CD14-positive monocyte (primary cell): ENCODE measurements at regions of chr5 and their contacts with region 1.

Region 1: DNA sequence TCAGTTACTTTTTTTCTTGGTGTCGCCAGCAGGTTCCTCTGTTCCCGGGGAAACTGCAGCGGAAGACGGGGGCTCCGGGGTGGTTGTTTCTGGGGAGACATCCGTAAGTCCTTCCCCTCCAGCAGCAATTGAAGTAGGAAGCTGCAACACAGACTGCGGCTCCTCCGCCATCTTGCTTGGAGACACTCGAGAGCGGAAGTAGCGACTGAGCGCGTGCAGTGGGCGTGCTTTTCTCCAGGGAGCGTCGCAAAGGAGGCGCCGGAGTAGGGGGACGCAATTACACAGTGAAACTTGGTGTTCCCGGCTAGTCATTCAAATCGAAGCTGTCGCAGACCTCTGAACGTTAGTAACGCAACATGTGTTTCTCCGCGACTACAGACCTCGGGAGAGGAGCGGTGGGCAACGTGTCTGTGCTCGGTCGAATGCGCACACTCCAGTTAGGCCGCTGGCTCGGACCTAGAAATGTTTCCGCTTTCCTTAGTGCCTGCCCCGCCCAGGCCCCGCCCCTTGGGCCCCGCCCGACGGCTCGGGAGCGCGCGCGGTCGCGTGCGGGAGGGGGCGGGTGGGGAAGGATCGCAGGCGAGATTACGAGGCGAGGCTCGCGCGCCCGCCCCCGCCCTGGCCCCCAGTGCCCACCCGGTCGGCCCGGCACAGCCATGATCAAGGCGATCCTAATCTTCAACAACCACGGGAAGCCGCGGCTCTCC is at the starts of genes AP3S1 and ATG12:
- DNase-seq: peak; percentile 91 to 96 (median 92)
- H3K4me3 ChIP-seq: peak within 1 kb of the TSS; percentile 75 to 92 (median 91)
- H3K4me3 Mint-ChIP-seq: peak within 1 kb of the TSS; percentile 95 to 98
- H3K27ac ChIP-seq: peak within 1 kb of the TSS; percentile 96 to 99
- H3K27ac Mint-ChIP-seq: peak within 1 kb of the TSS; percentile 98 to 100 (median 100)
- H3K4me1 ChIP-seq: peaks cover 36 to 48% of the 10 kb centered on the region in 2 donors
- H3K4me1 Mint-ChIP-seq: peaks cover 44% of the 10 kb centered on the region
- H3K27me3 ChIP-seq: no peaks in the 10 kb centered on the region
- H3K27me3 Mint-ChIP-seq: no peaks in the 10 kb centered on the region
- CTCF ChIP-seq: no peak
- polyA plus RNA-seq, gene AP3S1: 30.2 to 86.1 (median 84.8) TPM
- polyA plus RNA-seq, gene ATG12: 44.3 to 143 (median 101) TPM

Region 2: DNA sequence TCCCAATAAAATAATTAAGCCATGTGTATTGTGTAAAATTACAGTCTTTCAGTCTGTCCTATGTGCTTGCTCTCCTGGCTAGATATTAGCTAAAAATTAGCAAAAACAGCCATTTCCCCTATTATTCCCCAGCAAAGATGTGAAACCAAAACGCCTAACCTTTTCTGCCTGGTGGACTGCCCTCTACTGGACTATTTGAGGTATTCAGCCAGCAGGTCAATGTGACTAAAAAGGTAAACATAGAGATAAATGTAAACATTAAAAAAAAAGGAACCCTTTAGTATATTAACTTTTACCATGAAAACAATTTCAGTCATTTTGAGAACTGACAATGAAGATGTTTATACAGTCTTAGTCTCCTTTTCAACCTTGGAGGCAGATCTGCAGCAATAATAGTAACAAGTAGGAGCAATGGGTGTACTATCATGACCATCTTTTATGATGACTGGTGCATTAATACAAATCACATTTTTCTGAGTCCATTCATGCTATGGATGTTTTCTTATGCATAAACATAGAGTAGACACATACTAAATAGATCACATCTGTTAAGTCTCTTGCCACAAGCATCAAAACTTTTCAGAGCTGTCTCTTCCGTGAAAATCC is 10.3 kb before region 1 on chr5:
- intact Hi-C with region 1: no loop called
- DNase-seq: peak; percentile 37 to 57 (median 52)
- H3K4me3 ChIP-seq: no peak overlapping the region
- H3K4me3 Mint-ChIP-seq: no peak overlapping the region
- H3K27ac ChIP-seq: no peak overlapping the region
- H3K27ac Mint-ChIP-seq: peak overlapping the region in 1 of 7 donors; percentile 29
- H3K4me1 ChIP-seq: no peaks in the 10 kb centered on the region
- H3K4me1 Mint-ChIP-seq: no peaks in the 10 kb centered on the region
- H3K27me3 ChIP-seq: no peaks in the 10 kb centered on the region
- H3K27me3 Mint-ChIP-seq: no peaks in the 10 kb centered on the region
- CTCF ChIP-seq: peak; percentile 81

Region 3: GRCh38 chr5:116032094-116032517 is 190.6 kb after region 1 on chr5 and contains the start of gene ARL14EPL:
- intact Hi-C with region 1: loop called in 1 of 2 experiments (anchors 5 kb)
- DNase-seq: peak; percentile 70 to 86 (median 75)
- H3K4me3 ChIP-seq: peak within 1 kb of the TSS in 1 of 3 experiments; percentile 19
- H3K4me3 Mint-ChIP-seq: peak within 1 kb of the TSS in 1 of 2 donors; percentile 44
- H3K27ac ChIP-seq: no peak within 1 kb of the TSS
- H3K27ac Mint-ChIP-seq: peak within 1 kb of the TSS in 5 of 7 donors; percentile 15 to 84 (median 80)
- H3K4me1 ChIP-seq: peaks cover 14 to 15% of the 10 kb centered on the region in 2 donors
- H3K4me1 Mint-ChIP-seq: peaks cover 22% of the 10 kb centered on the region
- H3K27me3 ChIP-seq: no peaks in the 10 kb centered on the region
- H3K27me3 Mint-ChIP-seq: peaks cover 0 to 2% (median 0%) of the 10 kb centered on the region in 3 donors
- CTCF ChIP-seq: no peak
- polyA plus RNA-seq, gene ARL14EPL: 0.11 TPM in 1 of 3 donors, not detected in the others

Region 4: GRCh38 chr5:116084871-116085715 is 243.6 kb after region 1 on chr5 and contains the start of gene COMMD10:
- intact Hi-C with region 1: loop called (anchors 5 kb)
- DNase-seq: peak; percentile 60 to 81 (median 70)
- H3K4me3 ChIP-seq: peak within 1 kb of the TSS; percentile 75 to 92 (median 78)
- H3K4me3 Mint-ChIP-seq: peak within 1 kb of the TSS; percentile 94
- H3K27ac ChIP-seq: peak within 1 kb of the TSS; percentile 70 to 84
- H3K27ac Mint-ChIP-seq: peak within 1 kb of the TSS; percentile 90 to 98 (median 94)
- H3K4me1 ChIP-seq: peaks cover 18 to 22% of the 10 kb centered on the region in 2 donors
- H3K4me1 Mint-ChIP-seq: peaks cover 30% of the 10 kb centered on the region
- H3K27me3 ChIP-seq: no peaks in the 10 kb centered on the region
- H3K27me3 Mint-ChIP-seq: no peaks in the 10 kb centered on the region
- CTCF ChIP-seq: no peak
- polyA plus RNA-seq, gene COMMD10: 16.9 to 86.1 (median 61.2) TPM